ENCODE measurements at regions of chr2 and their contacts with region 1.

Region 1: GRCh38 chr2:26345545-26346453 is at the start of gene SELENOI:
- DNase-seq: peak; percentile 99 to 100 (median 99)
- ATAC-seq: peak; percentile 97
- H3K4me3 ChIP-seq: peak within 1 kb of the TSS; percentile 81
- H3K4me3 Mint-ChIP-seq: peak within 1 kb of the TSS; percentile 84 to 100 (median 98)
- H3K27ac ChIP-seq: peak within 1 kb of the TSS; percentile 88
- H3K27ac Mint-ChIP-seq: peak within 1 kb of the TSS; percentile 95 to 100 (median 99)
- H3K4me1 ChIP-seq: peaks cover 24 to 25% of the 10 kb centered on the region in 2 donors
- H3K4me1 Mint-ChIP-seq: peaks cover 28 to 62% (median 40%) of the 10 kb centered on the region in 7 donors
- H3K27me3 ChIP-seq: no peaks in the 10 kb centered on the region
- H3K27me3 Mint-ChIP-seq: no peaks in the 10 kb centered on the region
- total RNA-seq, gene SELENOI: 19.0 to 33.6 (median 22.4) TPM

Region 2: DNA sequence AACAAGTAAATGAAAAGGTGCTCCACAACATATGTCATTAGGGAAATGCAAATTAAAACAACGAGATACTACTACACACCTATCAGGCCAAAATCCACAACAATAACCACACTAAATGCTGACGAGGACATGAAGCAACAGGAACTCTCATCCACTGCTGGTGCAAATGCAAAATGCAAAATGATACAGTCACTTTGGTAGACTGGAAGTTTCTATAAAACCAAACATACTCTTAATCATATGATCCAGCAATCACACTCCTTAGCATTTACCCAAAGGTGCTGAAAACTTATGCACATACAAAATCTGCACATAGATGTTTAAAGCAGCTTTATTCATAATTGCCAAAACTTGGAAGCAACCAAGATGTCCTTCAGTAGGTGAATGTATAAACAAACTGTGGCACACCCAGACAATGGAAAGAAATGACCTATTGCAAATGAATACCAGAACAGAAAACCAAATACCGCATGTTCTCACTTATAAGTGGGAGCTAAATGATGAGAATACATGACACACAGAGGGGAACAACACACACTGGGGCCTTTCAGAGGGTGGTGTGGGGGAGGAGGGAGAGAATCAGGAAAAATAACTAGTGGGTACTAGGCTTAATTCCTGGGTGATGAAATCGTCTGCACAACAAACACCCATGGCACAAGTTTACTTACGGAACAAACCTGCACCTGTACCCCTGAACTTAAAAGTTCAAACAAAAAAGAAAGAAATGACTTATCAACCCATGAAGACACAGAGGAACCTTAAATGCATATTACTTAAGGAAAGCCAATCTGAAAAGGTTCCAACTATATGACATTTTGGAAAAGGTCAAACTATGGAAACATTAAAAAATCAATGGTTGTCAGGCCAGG is 547.9 kb before region 1 on chr2:
- CTCF ChIA-PET with region 1: no interaction called
- POLR2A ChIA-PET with region 1: no interaction called
- intact Hi-C with region 1: no loop called
- DNase-seq: no peak
- ATAC-seq: no peak
- H3K4me3 ChIP-seq: no peak overlapping the region
- H3K4me3 Mint-ChIP-seq: peak overlapping the region in 3 of 10 donors; percentile 1 to 37 (median 17)
- H3K27ac ChIP-seq: no peak overlapping the region
- H3K27ac Mint-ChIP-seq: peak overlapping the region; percentile 15 to 95 (median 88)
- H3K4me1 ChIP-seq: peaks cover 30 to 40% of the 10 kb centered on the region in 2 donors
- H3K4me1 Mint-ChIP-seq: peaks cover 39 to 91% (median 85%) of the 10 kb centered on the region in 7 donors
- H3K27me3 ChIP-seq: no peaks in the 10 kb centered on the region
- H3K27me3 Mint-ChIP-seq: no peaks in the 10 kb centered on the region

Region 3: DNA sequence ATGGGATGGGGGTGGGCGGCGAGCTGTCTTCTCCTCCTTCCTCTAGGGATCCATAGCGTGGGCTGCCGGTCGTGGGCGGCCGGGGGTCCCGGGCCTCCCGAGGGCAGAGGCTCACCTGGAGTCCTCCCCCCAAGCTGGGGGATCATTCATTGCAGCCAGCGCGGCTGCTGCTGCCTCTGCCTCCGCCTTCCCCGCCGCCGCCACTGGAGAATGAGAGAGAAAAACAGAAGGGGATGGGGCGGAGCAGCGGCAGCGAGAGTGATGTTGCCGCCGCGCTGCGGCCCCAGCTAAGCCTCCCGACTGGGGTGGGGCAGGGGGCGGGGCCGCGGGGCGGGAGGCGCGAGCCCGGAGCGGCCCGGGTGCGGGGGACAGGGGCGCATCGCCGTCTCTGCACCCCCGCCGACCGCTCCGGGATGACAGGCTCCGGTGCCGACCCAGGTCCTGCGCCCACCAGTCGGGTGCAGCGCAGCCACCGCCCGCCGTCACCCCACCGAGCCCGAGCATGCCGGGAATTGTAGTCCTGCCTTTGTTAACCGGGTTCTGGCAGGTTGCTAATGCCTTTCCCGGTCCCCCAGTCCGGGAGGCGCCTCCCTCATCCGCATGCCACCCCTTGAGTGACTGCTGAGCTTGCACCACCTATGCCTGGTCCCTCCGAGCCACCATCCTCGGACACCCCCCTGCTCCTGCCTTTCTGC is 363.4 kb before region 1 on chr2 and contains the start of gene KIF3C:
- CTCF ChIA-PET with region 1: no interaction called
- POLR2A ChIA-PET with region 1: no interaction called
- intact Hi-C with region 1: loop called (anchors 1 to 5 kb)
- DNase-seq: peak; percentile 59 to 76 (median 73)
- ATAC-seq: peak; percentile 93
- H3K4me3 ChIP-seq: peak within 1 kb of the TSS; percentile 64
- H3K4me3 Mint-ChIP-seq: peak within 1 kb of the TSS; percentile 83 to 94 (median 87)
- H3K27ac ChIP-seq: peak within 1 kb of the TSS; percentile 62
- H3K27ac Mint-ChIP-seq: peak within 1 kb of the TSS; percentile 28 to 89 (median 81)
- H3K4me1 ChIP-seq: peaks cover 0 to 5% of the 10 kb centered on the region in 2 donors
- H3K4me1 Mint-ChIP-seq: peaks cover 12 to 24% (median 16%) of the 10 kb centered on the region in 7 donors
- H3K27me3 ChIP-seq: no peaks in the 10 kb centered on the region
- H3K27me3 Mint-ChIP-seq: no peaks in the 10 kb centered on the region
- total RNA-seq, gene KIF3C: 2.9 to 6.3 (median 5.7) TPM

Region 4: GRCh38 chr2:26244309-26245121 is 101.3 kb before region 1 on chr2 and contains the starts of genes HADHA and HADHB:
- CTCF ChIA-PET with region 1: no interaction called
- POLR2A ChIA-PET with region 1: interaction called, 14 read pairs
- intact Hi-C with region 1: loop called (anchors 1 kb)
- DNase-seq: peak; percentile 76 to 91 (median 87)
- ATAC-seq: peak; percentile 92
- H3K4me3 ChIP-seq: peak within 1 kb of the TSS; percentile 99
- H3K4me3 Mint-ChIP-seq: peak within 1 kb of the TSS; percentile 96 to 100 (median 99)
- H3K27ac ChIP-seq: peak within 1 kb of the TSS; percentile 96
- H3K27ac Mint-ChIP-seq: peak within 1 kb of the TSS; percentile 98 to 100 (median 99)
- H3K4me1 ChIP-seq: peaks cover 13 to 19% of the 10 kb centered on the region in 2 donors
- H3K4me1 Mint-ChIP-seq: peaks cover 47 to 73% (median 57%) of the 10 kb centered on the region in 7 donors
- H3K27me3 ChIP-seq: no peaks in the 10 kb centered on the region
- H3K27me3 Mint-ChIP-seq: no peaks in the 10 kb centered on the region
- total RNA-seq, gene HADHA: 83.8 to 111 (median 102) TPM
- total RNA-seq, gene HADHB: 38.1 to 77.5 (median 64.2) TPM

Region 5: DNA sequence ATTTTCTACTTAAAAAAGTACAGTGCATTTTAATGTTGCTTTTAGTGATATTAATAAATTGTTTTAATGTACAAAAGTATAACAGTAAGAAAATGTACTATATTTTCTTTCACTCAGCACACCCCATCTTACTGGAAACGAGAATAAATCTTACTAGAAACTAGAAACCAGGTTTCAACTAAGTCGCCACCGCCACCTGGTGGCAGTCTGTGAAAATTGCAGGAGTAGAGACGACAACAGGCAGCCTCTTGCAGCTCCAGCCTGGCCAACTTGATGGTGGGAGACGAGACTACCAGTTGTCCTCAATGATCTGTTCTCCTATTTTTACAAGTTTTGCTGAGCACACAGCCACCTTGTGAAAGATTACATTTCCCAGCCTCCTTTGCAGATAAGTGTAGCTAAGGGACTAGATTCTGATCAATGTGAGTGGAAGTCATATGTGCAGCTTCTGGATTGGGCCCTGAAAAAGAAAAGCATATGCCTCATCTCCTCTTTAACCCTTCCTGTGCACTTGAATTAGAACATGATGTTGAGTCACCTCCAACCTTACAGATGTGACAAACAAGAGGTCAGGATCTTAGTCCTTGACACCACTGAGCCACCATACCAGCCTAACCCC is 123.4 kb after region 1 on chr2:
- CTCF ChIA-PET with region 1: no interaction called
- POLR2A ChIA-PET with region 1: no interaction called
- intact Hi-C with region 1: loop called in 1 of 2 experiments (anchors 2 kb)
- DNase-seq: peak in 8 of 9 donors; percentile 10 to 61 (median 34)
- ATAC-seq: peak; percentile 40
- H3K4me3 ChIP-seq: no peak overlapping the region
- H3K4me3 Mint-ChIP-seq: no peak overlapping the region
- H3K27ac ChIP-seq: no peak overlapping the region
- H3K27ac Mint-ChIP-seq: no peak overlapping the region
- H3K4me1 ChIP-seq: no peaks in the 10 kb centered on the region
- H3K4me1 Mint-ChIP-seq: no peaks in the 10 kb centered on the region
- H3K27me3 ChIP-seq: no peaks in the 10 kb centered on the region
- H3K27me3 Mint-ChIP-seq: no peaks in the 10 kb centered on the region

Region 6: GRCh38 chr2:27050281-27050995 is 704.6 kb after region 1 on chr2:
- CTCF ChIA-PET with region 1: no interaction called
- POLR2A ChIA-PET with region 1: interaction called, 4 read pairs
- intact Hi-C with region 1: loop called in 1 of 2 experiments (anchors 5 kb)
- DNase-seq: peak; percentile 77 to 95 (median 94)
- ATAC-seq: peak; percentile 76
- H3K4me3 ChIP-seq: peak overlapping the region; percentile 99
- H3K4me3 Mint-ChIP-seq: peak overlapping the region; percentile 86 to 100 (median 99)
- H3K27ac ChIP-seq: peak overlapping the region; percentile 84
- H3K27ac Mint-ChIP-seq: peak overlapping the region; percentile 96 to 100 (median 100)
- H3K4me1 ChIP-seq: peaks cover 8 to 15% of the 10 kb centered on the region in 2 donors
- H3K4me1 Mint-ChIP-seq: peaks cover 10 to 34% (median 19%) of the 10 kb centered on the region in 7 donors
- H3K27me3 ChIP-seq: no peaks in the 10 kb centered on the region
- H3K27me3 Mint-ChIP-seq: peaks cover 0 to 8% (median 4%) of the 10 kb centered on the region in 5 donors